RWPE1 (cell line): ENCODE measurements at regions of chr11 and their contacts with region 1.

Region 1: GRCh38 chr11:119728651-119729580 is at the start of gene NECTIN1:
- DNase-seq: peak; percentile 93
- H3K27ac ChIP-seq: peak within 1 kb of the TSS; percentile 90
- CTCF ChIP-seq: peak; percentile 97

Region 2: DNA sequence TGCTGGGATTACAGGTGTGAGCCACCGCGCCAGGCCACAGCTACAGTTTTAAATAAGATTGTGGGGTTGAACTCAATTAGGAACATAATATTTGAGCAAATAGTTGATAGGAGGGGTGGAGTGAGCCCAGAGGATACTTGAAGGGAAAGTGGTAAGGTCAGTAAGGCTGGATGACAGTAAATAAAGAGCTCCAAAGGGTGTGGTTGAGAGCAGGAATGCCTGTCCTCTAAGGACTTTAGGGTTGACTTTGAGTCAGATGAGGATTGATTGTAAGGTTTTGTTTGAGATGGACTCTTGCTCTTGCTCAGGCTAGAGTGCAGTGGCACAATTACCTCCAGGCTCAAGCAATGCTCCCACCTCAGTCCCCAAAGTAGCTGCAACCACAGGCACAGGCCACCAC is 755.0 kb before region 1 on chr11:
- CTCF ChIA-PET with region 1: no interaction called
- POLR2A ChIA-PET with region 1: no interaction called
- DNase-seq: no peak
- H3K27ac ChIP-seq: no peak overlapping the region
- CTCF ChIP-seq: no peak

Region 3: GRCh38 chr11:119666463-119667131 is 62.3 kb before region 1 on chr11:
- CTCF ChIA-PET with region 1: interaction called, 26 read pairs
- POLR2A ChIA-PET with region 1: no interaction called
- DNase-seq: peak; percentile 73
- H3K27ac ChIP-seq: peak overlapping the region; percentile 80
- CTCF ChIP-seq: peak; percentile 88

Region 4: DNA sequence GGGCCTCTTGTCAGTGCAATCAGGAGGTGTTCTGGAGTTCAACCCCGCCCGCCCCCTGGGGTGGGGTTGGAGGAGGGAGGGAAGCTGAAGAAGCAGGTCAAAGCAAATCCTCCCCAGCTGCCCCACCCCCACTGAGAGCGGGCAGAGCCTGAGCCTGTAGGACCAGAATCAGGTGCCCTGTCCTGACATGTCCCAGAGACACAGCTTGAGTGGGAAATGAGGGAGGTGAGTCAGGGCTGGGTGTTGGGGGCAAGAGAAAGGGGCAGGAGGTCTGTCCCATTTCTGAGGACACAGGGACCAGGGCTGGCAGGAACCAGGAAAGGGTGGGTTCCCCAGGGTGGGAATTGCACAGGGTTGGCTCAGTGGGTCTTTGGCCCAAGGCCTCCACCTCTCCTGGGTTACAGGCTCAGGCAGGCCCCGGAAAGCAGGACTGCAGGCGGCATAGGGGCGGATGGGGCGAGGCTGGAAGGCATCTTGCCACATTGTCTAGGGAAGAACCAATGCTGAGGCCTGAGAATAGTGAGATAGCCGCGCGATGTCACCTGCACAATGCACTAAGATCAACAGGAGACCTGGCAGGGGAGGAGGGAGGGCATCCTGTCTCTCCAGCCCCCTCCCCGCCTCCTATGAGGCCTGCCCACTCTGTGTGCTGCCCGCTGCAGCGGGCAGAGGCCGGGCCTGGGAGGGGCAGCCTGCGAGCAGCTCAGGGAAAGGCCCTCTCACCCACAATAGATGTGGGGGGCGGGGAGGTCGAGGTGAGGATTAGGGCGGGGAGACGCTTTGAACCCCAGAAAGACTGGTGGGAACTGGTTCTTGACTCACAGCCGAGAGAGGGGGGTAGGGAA is 32.3 kb before region 1 on chr11:
- CTCF ChIA-PET with region 1: interaction called, 13 read pairs
- POLR2A ChIA-PET with region 1: interaction called, 6 read pairs
- DNase-seq: peak; percentile 95
- H3K27ac ChIP-seq: peak overlapping the region; percentile 100
- CTCF ChIP-seq: no peak

Region 5: GRCh38 chr11:120108154-120108865 is 379.4 kb after region 1 on chr11:
- CTCF ChIA-PET with region 1: interaction called, 17 read pairs
- POLR2A ChIA-PET with region 1: no interaction called
- DNase-seq: peak; percentile 93
- H3K27ac ChIP-seq: peak overlapping the region; percentile 98
- CTCF ChIP-seq: peak; percentile 99